ENCODE measurements at regions of chr2 and their contacts with region 1.

Region 1: GRCh38 chr2:73163483-73164367 is 38.6 kb upstream of the NOTO start:
- DNase-seq: peak; percentile 27 to 80 (median 58)
- ATAC-seq: peak; percentile 79
- H3K4me3 ChIP-seq: no peak overlapping the region
- H3K4me3 Mint-ChIP-seq: no peak overlapping the region
- H3K27ac ChIP-seq: no peak overlapping the region
- H3K27ac Mint-ChIP-seq: no peak overlapping the region
- H3K4me1 ChIP-seq: no peaks in the 10 kb centered on the region
- H3K4me1 Mint-ChIP-seq: no peaks in the 10 kb centered on the region
- H3K27me3 ChIP-seq: no peaks in the 10 kb centered on the region
- H3K27me3 Mint-ChIP-seq: peaks cover 16% of the 10 kb centered on the region
- CTCF ChIP-seq: peak; percentile 82

Region 2: GRCh38 chr2:72770879-72771461 is 392.8 kb before region 1 on chr2:
- CTCF ChIA-PET with region 1: no interaction called
- POLR2A ChIA-PET with region 1: no interaction called
- intact Hi-C with region 1: loop called in 1 of 2 experiments (anchors 5 kb)
- DNase-seq: peak in 12 of 14 experiments; percentile 11 to 84 (median 46)
- ATAC-seq: peak; percentile 69
- H3K4me3 ChIP-seq: no peak overlapping the region
- H3K4me3 Mint-ChIP-seq: no peak overlapping the region
- H3K27ac ChIP-seq: no peak overlapping the region
- H3K27ac Mint-ChIP-seq: no peak overlapping the region
- H3K4me1 ChIP-seq: no peaks in the 10 kb centered on the region
- H3K4me1 Mint-ChIP-seq: no peaks in the 10 kb centered on the region
- H3K27me3 ChIP-seq: no peaks in the 10 kb centered on the region
- H3K27me3 Mint-ChIP-seq: no peaks in the 10 kb centered on the region
- CTCF ChIP-seq: peak; percentile 91

Region 3: DNA sequence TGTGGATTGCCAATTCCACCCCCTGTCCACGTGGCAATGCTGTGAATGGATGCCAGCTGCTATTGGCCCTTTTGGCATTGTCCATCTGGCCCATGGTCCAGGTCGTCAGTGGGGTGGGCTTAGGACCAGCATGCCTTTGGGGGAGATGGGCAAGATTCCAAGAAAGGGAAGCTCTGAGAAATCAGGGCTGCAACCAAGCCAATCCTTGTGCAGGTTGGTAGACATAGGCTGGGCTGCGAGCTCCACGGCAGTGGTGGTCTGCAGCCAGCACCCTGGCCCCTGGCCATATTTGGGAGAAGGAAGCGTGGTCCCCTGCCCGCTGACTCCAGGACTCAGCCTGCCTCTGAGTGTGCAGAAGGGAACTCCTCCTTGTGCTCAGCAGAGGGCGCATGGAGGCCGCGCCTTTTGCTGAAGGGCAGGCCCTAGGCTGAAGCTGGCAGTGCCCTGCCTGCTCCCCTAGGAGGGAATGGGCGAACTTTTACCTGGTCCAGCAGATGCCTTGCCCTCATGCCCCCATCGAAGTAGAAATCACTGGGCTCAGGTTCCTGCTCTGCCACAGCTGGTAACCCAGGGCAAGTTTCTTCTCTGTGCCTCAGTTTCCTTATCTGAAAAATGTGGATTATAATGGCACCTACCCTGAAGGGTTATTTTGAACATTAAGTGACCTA is 271.1 kb before region 1 on chr2:
- CTCF ChIA-PET with region 1: no interaction called
- POLR2A ChIA-PET with region 1: no interaction called
- intact Hi-C with region 1: loop called (anchors 1 to 5 kb)
- DNase-seq: peak in 11 of 14 experiments; percentile 22 to 76 (median 50)
- ATAC-seq: peak; percentile 78
- H3K4me3 ChIP-seq: no peak overlapping the region
- H3K4me3 Mint-ChIP-seq: no peak overlapping the region
- H3K27ac ChIP-seq: no peak overlapping the region
- H3K27ac Mint-ChIP-seq: no peak overlapping the region
- H3K4me1 ChIP-seq: peaks cover 8% of the 10 kb centered on the region
- H3K4me1 Mint-ChIP-seq: no peaks in the 10 kb centered on the region
- H3K27me3 ChIP-seq: peaks cover 52 to 63% of the 10 kb centered on the region in 2 experiments
- H3K27me3 Mint-ChIP-seq: peaks cover 94% of the 10 kb centered on the region
- CTCF ChIP-seq: peak; percentile 48

Region 4: GRCh38 chr2:72993147-72993932 is 170.4 kb before region 1 on chr2:
- CTCF ChIA-PET with region 1: interaction called, 4 read pairs
- POLR2A ChIA-PET with region 1: no interaction called
- intact Hi-C with region 1: loop called (anchors 1 kb)
- DNase-seq: peak in 12 of 14 experiments; percentile 6 to 76 (median 36)
- ATAC-seq: peak; percentile 49
- H3K4me3 ChIP-seq: no peak overlapping the region
- H3K4me3 Mint-ChIP-seq: no peak overlapping the region
- H3K27ac ChIP-seq: no peak overlapping the region
- H3K27ac Mint-ChIP-seq: no peak overlapping the region
- H3K4me1 ChIP-seq: no peaks in the 10 kb centered on the region
- H3K4me1 Mint-ChIP-seq: no peaks in the 10 kb centered on the region
- H3K27me3 ChIP-seq: no peaks in the 10 kb centered on the region
- H3K27me3 Mint-ChIP-seq: no peaks in the 10 kb centered on the region
- CTCF ChIP-seq: peak; percentile 88

Region 5: GRCh38 chr2:73085691-73086360 is 77.9 kb before region 1 on chr2:
- CTCF ChIA-PET with region 1: interaction called, 9 read pairs
- POLR2A ChIA-PET with region 1: no interaction called
- intact Hi-C with region 1: loop called (anchors 1 kb)
- DNase-seq: peak; percentile 73 to 89 (median 78)
- ATAC-seq: peak; percentile 96
- H3K4me3 ChIP-seq: no peak overlapping the region
- H3K4me3 Mint-ChIP-seq: no peak overlapping the region
- H3K27ac ChIP-seq: no peak overlapping the region
- H3K27ac Mint-ChIP-seq: no peak overlapping the region
- H3K4me1 ChIP-seq: peaks cover 3% of the 10 kb centered on the region
- H3K4me1 Mint-ChIP-seq: no peaks in the 10 kb centered on the region
- H3K27me3 ChIP-seq: no peaks in the 10 kb centered on the region
- H3K27me3 Mint-ChIP-seq: no peaks in the 10 kb centered on the region
- CTCF ChIP-seq: peak; percentile 89

Measured in CD4-positive, alpha-beta T cell (primary cell).